Dendritic cell treated with granulocyte-macrophage colony-stimulating factor and Interleukin-4, amounts not matched to agents 40 ng/mL and 50 ng/mL, for 4 days (primary cell): ENCODE measurements at regions of chr2 and their contacts with region 1.

Region 1: DNA sequence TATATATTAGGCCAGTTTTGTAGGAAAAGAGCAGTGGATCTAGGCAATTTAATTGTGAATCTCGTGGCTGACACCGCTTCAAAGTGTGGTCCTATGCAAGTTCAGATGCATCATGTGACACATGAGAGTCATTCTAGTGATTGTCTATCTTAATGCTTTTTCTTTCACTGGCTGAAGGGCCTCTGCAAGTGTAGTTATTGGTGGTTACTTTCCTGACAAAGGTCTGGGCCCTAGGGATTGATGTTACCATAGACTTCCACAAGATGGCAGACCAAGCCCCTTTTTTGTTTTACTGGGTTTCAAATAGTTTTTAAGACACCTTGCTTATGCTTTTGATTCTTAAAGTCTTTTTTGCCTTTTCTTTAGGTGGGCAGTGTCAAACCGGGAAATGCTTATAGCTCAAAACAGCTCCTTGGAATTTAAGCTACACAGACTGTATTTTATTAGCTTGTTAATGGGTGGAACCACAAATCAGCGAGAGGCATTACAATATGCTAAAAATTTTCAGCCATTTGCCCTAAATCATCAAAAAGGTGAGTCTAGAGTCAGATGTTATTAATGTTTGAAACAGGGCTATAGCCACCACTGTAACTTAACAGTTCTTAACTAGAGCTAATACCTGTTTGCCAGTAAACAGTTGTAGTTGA is 25.9 kb downstream of the CD8A start:
- H3K4me3 Mint-ChIP-seq: no peak overlapping the region
- H3K27ac Mint-ChIP-seq: no peak overlapping the region
- H3K4me1 Mint-ChIP-seq: peaks cover 5% of the 10 kb centered on the region
- H3K27me3 Mint-ChIP-seq: no peaks in the 10 kb centered on the region

Region 2: GRCh38 chr2:86783615-86784339 is 19.0 kb after region 1 on chr2:
- intact Hi-C with region 1: no loop called
- H3K4me3 Mint-ChIP-seq: no peak overlapping the region
- H3K27ac Mint-ChIP-seq: peak overlapping the region; percentile 78
- H3K4me1 Mint-ChIP-seq: peaks cover 43% of the 10 kb centered on the region
- H3K27me3 Mint-ChIP-seq: peaks cover 31% of the 10 kb centered on the region

Region 3: GRCh38 chr2:86808315-86809161 is 43.8 kb after region 1 on chr2:
- intact Hi-C with region 1: loop called (anchors 5 kb)
- H3K4me3 Mint-ChIP-seq: peak overlapping the region; percentile 83
- H3K27ac Mint-ChIP-seq: no peak overlapping the region
- H3K4me1 Mint-ChIP-seq: peaks cover 29% of the 10 kb centered on the region
- H3K27me3 Mint-ChIP-seq: peaks cover 65% of the 10 kb centered on the region

Region 4: GRCh38 chr2:86825693-86826381 is 61.1 kb after region 1 on chr2:
- intact Hi-C with region 1: no loop called
- H3K4me3 Mint-ChIP-seq: no peak overlapping the region
- H3K27ac Mint-ChIP-seq: no peak overlapping the region
- H3K4me1 Mint-ChIP-seq: no peaks in the 10 kb centered on the region
- H3K27me3 Mint-ChIP-seq: peaks cover 8% of the 10 kb centered on the region